OCI-LY7 (cell line): ENCODE measurements at regions of chrX and their contacts with region 1.

Region 1: DNA sequence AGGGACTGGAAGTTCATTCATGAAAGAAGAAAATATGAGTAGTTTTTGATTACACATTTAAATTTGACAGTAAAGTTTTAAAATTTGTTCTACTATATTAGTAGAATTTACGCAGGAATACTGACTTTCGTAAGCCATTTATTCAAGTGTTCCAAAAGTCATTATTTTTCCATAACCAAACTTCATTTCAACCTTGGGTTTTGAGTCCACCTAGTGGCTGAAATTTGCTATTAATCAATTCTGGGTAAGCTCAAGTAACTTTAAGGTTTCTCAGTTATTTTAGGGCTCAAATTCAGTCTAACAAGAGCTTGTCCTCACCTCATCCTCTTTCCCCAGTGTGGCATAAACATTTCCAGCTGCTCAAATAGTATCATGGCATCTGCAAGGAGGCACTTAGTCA is 175.4 kb downstream of the SH3BGRL start:
- DNase-seq: peak; percentile 23
- H3K4me3 ChIP-seq: no peak overlapping the region
- H3K27ac ChIP-seq: no peak overlapping the region
- H3K4me1 ChIP-seq: no peaks in the 10 kb centered on the region
- CTCF ChIP-seq: peak; percentile 72

Region 2: DNA sequence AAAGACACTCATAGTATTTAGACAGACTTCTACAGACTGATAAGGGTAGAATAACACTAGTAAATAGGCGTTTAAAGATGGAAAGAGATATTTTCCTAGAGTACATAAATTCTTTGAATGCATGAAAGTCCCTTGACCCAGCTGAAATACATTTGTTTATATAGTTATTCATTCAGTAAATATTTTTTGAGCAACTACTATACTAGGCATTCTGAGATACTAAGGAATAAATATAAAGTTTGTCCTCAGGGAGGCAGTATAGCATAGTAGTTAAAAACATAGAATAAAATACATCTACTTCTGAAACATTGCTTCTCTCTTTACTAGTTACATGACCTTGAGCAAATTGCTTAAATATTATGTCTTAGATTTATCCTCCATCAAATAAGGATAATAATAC is 203.0 kb before region 1 on chrX:
- CTCF ChIA-PET with region 1: no interaction called
- POLR2A ChIA-PET with region 1: interaction called, 3 read pairs
- intact Hi-C with region 1: loop called (anchors 2 kb)
- DNase-seq: peak; percentile 14
- H3K4me3 ChIP-seq: no peak overlapping the region
- H3K27ac ChIP-seq: no peak overlapping the region
- H3K4me1 ChIP-seq: no peaks in the 10 kb centered on the region
- CTCF ChIP-seq: peak; percentile 69